AG04449 (cell line): ENCODE measurements at regions of chr13 and their contacts with region 1.

Region 1: DNA sequence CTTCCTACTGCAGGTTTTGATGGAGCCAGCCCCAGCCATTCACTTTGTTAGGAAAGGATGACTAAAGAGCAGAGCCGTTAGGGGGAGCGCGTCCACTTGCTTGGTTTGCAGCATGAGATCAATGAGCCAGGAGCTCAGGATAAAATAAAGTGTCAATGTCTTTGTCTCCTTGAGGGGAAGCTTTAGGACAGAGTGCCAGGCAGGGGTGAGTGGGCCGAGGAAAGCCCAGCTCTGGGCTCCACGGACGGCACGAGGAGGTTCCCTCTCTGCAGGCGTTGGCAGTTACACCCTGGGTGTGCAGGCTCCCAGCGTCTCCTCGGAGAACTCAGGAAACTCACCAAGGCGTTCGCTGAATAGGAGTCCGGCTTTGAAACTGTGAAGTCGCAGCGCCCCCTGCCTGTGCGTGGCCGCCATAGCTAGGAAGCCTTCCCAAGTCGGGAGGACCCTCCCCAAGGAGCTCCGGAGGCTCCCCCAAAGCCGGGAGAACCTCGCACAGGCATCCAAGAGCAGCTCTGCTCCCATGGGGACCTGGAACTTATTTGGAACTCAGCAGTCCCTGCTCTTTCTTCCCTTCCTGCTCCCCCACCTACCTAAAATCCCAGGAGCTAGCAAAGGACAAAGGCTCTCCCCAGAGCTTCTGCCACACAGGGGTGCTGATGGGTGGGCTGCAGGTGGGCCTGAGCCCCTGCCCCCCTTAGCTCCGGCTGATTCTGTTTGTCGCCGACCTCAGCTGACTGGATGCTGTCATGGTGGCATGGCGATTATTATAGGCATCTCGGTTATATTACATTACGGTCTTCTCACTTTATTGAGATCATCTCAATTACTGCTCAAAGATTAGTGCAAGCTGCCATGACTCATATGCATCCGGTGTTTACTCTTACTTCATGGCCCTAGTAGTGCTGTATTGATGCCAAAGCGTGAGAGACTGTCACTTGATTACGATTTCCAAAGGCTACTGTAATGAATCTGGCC is 34.4 kb downstream of the GSX1 start:
- DNase-seq: peak; percentile 10
- H3K4me3 ChIP-seq: peak overlapping the region; percentile 49
- CTCF ChIP-seq: peak; percentile 95

Region 2: GRCh38 chr13:26946684-26947343 is 879.9 kb before region 1 on chr13:
- CTCF ChIA-PET with region 1: interaction called, 14 read pairs
- POLR2A ChIA-PET with region 1: no interaction called
- DNase-seq: no peak
- H3K4me3 ChIP-seq: no peak overlapping the region
- CTCF ChIP-seq: peak; percentile 57

Region 3: DNA sequence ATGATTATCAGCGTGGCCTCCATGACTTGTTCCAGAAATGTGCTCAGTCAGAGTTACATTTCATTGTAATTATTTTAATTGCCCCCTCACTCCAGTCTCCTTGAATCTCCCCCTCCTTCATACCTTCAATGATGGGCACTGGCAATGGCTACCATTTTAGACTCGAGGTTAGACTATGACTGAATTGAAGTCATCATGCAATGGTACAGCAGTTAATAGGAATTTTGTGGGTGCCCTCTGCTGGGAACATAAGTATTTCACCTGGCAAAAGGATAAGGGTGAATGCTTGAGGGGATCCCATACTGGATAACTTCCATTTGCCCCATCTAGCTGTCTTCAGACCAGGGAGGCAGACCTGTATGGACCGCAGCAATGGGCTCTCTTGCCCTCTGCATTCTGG is 622.8 kb before region 1 on chr13:
- CTCF ChIA-PET with region 1: no interaction called
- POLR2A ChIA-PET with region 1: no interaction called
- DNase-seq: no peak
- H3K4me3 ChIP-seq: no peak overlapping the region
- CTCF ChIP-seq: no peak

Region 4: GRCh38 chr13:27374650-27375049 is 452.0 kb before region 1 on chr13:
- CTCF ChIA-PET with region 1: interaction called, 294 read pairs
- POLR2A ChIA-PET with region 1: no interaction called
- DNase-seq: peak; percentile 40
- H3K4me3 ChIP-seq: no peak overlapping the region
- CTCF ChIP-seq: peak; percentile 76

Region 5: GRCh38 chr13:27424246-27425157 is 402.2 kb before region 1 on chr13 and contains the start of gene GTF3A:
- CTCF ChIA-PET with region 1: interaction called, 11 read pairs
- POLR2A ChIA-PET with region 1: no interaction called
- DNase-seq: no peak
- H3K4me3 ChIP-seq: peak within 1 kb of the TSS; percentile 83
- CTCF ChIP-seq: no peak

Region 6: DNA sequence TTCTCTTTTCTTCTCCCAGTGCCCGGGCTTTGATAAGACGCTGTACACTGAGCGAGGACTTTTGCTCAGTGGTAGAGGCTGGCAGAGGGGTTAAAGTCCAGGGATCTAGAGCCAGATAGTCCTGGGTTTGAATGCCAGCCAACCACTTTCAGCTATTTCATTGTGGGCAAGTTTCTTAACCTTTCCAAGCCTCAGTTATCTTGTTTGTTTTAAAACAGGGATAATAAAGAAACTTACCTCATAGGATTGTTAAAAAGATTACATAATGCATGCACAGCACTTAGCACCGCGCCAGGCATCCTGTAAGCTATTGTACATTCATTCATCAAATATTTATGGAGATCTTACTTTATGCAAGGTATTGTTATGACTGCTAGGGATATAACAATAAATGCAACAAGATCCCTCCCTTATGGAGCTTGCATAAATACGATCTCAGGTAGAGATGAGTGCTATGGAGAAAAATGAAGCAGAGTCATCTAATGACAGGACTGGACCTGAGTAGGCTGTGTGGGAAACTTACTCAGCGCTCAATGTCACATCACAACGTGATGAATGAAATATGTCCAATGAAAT is 277.2 kb before region 1 on chr13:
- CTCF ChIA-PET with region 1: interaction called, 335 read pairs
- POLR2A ChIA-PET with region 1: no interaction called
- DNase-seq: no peak
- H3K4me3 ChIP-seq: no peak overlapping the region
- CTCF ChIP-seq: no peak

Region 7: GRCh38 chr13:27644302-27644701 is 182.4 kb before region 1 on chr13:
- CTCF ChIA-PET with region 1: interaction called, 14 read pairs
- POLR2A ChIA-PET with region 1: no interaction called
- DNase-seq: peak; percentile 53
- H3K4me3 ChIP-seq: no peak overlapping the region
- CTCF ChIP-seq: no peak

Region 8: DNA sequence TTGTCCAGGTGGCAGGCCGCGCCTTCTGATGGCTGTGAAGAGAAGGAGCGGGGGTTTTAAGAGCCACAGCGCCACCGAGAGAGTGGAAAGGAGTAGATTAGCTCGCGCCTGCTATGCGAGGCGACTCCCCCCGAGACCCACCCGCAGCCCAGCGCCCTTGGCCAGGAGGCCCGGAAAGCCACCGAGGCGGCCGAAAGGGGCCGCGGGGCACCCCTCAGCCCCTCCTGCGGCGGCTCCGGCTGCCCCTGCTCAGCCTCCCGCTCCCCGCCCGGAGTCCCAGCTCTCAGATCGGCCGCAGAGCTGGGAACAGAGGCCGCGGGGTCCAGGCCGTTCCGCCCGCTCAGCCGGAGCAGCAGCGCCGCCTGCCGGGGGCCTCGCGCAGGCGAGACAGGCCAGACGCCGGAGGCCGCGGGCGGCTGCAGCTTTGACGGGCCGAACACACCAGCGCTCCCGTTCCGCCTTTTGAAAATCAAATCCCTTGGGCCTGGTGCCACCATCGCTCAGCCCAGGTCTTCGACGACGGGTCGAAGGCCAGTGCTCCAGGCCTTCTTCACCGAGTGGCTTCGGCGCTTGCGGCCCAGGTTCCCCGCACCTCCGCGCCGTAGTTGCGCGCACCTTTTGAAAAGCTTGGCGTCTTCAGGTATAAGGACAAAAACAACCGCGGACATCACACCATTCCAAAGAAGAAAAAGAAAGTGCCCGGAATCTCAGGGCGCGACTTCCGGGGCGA is 127.2 kb after region 1 on chr13:
- CTCF ChIA-PET with region 1: interaction called, 111 read pairs
- POLR2A ChIA-PET with region 1: no interaction called
- DNase-seq: no peak
- H3K4me3 ChIP-seq: peak overlapping the region; percentile 56
- CTCF ChIP-seq: peak; percentile 84

Region 9: GRCh38 chr13:28282451-28282850 is 455.8 kb after region 1 on chr13:
- CTCF ChIA-PET with region 1: no interaction called
- POLR2A ChIA-PET with region 1: no interaction called
- DNase-seq: no peak
- H3K4me3 ChIP-seq: no peak overlapping the region
- CTCF ChIP-seq: no peak